ENCODE measurements at regions of chr9 and their contacts with region 1.

Region 1: GRCh38 chr9:35102926-35103659 is at the start of gene STOML2:
- DNase-seq: peak; percentile 91
- H3K4me3 Mint-ChIP-seq: peak within 1 kb of the TSS; percentile 97
- H3K27ac Mint-ChIP-seq: peak within 1 kb of the TSS; percentile 96
- H3K4me1 Mint-ChIP-seq: peaks cover 18% of the 10 kb centered on the region
- H3K27me3 Mint-ChIP-seq: no peaks in the 10 kb centered on the region
- total RNA-seq, gene STOML2: 211 and 214 TPM in 2 replicates

Region 2: DNA sequence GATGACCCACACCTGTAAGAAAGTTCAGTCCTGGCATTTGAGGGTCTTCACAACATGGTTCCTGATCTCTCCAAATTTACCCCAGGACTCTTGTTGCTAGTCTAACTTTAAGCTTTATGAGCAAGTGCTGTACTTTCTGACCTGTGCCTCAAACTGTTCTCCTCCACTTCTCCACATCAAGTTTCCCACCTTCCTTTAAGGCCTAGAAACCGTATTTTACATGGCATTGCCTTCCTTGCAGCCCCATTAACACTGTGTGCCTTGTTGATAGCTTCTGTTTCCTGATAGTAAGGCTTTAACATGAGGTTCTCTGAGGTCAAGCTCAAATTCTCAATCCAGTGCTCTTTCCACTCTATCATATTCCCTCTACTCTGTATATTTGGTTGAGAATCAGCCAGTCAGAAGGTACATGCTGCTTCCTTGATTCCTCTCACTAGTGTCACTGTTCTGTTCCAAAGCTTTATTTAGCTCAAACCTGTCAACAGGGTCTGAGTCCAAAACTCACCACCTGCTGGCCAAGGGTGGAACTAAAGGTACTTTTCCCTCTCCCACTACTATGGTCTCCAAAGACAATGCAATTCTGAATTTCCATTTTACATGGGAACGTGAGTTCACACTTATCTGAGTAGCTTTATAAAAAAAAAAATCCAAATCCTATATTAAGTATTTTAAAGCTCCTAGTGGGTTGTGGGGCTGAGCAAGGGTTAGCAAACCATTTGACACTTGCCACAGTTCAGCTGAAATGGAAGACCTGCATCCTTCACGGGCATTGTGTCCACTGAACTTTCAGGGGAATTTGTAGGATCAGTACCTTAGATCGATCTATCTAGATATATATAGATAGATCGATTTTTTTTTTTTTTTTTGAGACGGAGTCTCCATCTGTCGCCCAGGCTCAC is 51.8 kb before region 1 on chr9:
- intact Hi-C with region 1: no loop called
- DNase-seq: peak; percentile 33
- H3K4me3 Mint-ChIP-seq: no peak overlapping the region
- H3K27ac Mint-ChIP-seq: peak overlapping the region; percentile 48
- H3K4me1 Mint-ChIP-seq: peaks cover 4% of the 10 kb centered on the region
- H3K27me3 Mint-ChIP-seq: no peaks in the 10 kb centered on the region

Region 3: DNA sequence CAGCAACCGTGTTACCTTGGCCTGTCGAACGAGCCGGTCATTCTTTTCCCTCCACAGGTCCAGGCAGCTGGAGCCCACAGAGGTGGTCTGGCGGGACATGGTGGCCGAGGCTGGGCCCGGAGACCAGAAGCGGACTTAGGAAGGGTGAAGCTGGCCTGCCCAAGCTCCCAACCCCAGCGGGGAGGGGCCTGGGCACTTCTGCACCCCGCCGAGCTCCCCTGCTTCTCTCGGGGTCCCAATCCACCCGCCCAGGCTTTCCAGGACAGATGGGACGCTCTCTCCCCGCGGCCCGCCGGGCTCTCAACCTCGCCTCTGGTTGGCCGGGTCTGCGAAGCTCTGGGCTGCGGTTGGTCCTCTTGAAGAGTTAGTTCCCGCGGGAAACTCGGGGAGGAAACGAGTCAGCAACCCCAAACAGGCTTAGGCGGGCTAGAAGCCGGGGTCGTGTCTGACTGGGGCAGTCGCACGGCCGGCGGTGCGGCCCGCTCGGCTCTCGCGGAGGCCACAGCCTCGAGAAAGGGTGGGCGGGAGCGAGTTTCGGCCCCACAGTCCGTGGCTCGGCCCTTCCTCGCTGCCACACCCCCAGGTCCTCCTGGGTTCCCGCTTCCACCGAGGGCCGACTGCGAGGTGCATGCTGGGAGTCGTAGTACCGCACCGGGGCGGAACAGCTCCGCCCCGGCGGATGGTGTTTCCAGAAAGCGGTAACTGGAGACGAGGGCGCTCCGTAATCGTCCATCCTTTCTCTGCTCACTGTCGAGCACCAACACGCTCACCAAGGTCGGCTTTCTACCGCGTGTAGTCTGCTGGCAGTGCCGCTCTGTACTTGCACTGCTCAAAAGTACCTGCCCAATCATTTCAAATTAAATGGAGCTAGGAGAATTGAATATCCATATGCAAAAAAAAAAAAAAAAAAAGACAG is 23.4 kb before region 1 on chr9 and contains the start of gene FANCG:
- intact Hi-C with region 1: loop called (anchors 1 kb)
- DNase-seq: peak; percentile 86
- H3K4me3 Mint-ChIP-seq: peak within 1 kb of the TSS; percentile 96
- H3K27ac Mint-ChIP-seq: peak within 1 kb of the TSS; percentile 97
- H3K4me1 Mint-ChIP-seq: peaks cover 27% of the 10 kb centered on the region
- H3K27me3 Mint-ChIP-seq: no peaks in the 10 kb centered on the region
- total RNA-seq, gene FANCG: 102 and 107 TPM in 2 replicates

Measured in activated T-helper 2 cell treated with anti-CD3 and anti-CD28 coated beads, Interferon-gamma antibody, Interleukin-2, Interleukin-4, amounts not matched to agents 10 μg/mL and 5 μg/mL and 100 μg/mL, durations not matched to agents 14 hours and 24 hours and 36 hours (primary cell).